ENCODE measurements at regions of chrX and their contacts with region 1.

Region 1: DNA sequence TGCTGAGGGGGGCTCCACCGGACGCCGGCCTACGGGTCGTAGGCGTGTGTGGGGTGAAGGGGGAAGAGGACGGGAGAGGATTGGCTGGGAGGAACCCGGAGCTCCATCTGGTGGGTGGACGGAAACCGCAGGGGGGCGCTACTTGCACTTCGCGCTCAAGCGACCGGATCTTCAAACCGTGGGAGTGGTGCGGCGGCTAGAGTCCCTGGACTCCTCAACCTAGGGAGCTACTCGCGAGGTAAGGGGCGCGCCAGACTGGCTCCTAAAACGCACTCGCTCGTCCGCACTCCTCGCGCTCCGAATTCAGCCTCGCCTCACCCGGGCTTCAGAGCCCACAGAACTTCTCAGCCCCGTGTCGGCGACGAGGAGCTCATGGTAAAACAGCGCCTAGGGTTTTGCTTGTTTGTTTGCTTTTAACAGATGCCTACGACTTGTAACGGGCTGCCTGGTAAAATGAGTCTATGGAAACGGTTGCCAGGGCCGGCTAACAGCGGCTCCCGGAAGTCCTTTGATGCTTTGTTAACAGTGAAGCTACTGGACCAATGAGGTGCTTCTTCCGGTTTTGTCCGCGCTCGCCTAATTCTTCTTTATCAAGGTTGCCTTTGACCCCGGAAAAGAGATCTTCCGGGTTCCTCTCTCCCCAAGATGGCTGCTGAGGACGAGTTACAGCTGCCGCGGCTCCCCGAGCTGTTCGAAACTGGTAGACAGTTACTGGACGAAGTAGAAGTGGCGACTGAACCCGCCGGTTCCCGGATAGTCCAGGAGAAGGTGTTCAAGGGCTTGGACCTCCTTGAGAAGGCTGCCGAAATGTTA is at the start of gene IGBP1:
- H3K4me3 Mint-ChIP-seq: peak within 1 kb of the TSS; percentile 98
- H3K27ac Mint-ChIP-seq: peak within 1 kb of the TSS; percentile 93
- H3K4me1 Mint-ChIP-seq: peaks cover 26% of the 10 kb centered on the region
- H3K27me3 Mint-ChIP-seq: peaks cover 2% of the 10 kb centered on the region

Region 2: GRCh38 chrX:69615779-69616456 is 517.6 kb before region 1 on chrX and contains the start of gene EDA:
- intact Hi-C with region 1: loop called (anchors 5 kb)
- H3K4me3 Mint-ChIP-seq: peak within 1 kb of the TSS; percentile 81
- H3K27ac Mint-ChIP-seq: peak within 1 kb of the TSS; percentile 51
- H3K4me1 Mint-ChIP-seq: peaks cover 5% of the 10 kb centered on the region
- H3K27me3 Mint-ChIP-seq: peaks cover 26% of the 10 kb centered on the region

Region 3: GRCh38 chrX:70168238-70169188 is 35.0 kb after region 1 on chrX:
- intact Hi-C with region 1: no loop called
- H3K4me3 Mint-ChIP-seq: no peak overlapping the region
- H3K27ac Mint-ChIP-seq: no peak overlapping the region
- H3K4me1 Mint-ChIP-seq: peaks cover 9% of the 10 kb centered on the region
- H3K27me3 Mint-ChIP-seq: no peaks in the 10 kb centered on the region

Region 4: DNA sequence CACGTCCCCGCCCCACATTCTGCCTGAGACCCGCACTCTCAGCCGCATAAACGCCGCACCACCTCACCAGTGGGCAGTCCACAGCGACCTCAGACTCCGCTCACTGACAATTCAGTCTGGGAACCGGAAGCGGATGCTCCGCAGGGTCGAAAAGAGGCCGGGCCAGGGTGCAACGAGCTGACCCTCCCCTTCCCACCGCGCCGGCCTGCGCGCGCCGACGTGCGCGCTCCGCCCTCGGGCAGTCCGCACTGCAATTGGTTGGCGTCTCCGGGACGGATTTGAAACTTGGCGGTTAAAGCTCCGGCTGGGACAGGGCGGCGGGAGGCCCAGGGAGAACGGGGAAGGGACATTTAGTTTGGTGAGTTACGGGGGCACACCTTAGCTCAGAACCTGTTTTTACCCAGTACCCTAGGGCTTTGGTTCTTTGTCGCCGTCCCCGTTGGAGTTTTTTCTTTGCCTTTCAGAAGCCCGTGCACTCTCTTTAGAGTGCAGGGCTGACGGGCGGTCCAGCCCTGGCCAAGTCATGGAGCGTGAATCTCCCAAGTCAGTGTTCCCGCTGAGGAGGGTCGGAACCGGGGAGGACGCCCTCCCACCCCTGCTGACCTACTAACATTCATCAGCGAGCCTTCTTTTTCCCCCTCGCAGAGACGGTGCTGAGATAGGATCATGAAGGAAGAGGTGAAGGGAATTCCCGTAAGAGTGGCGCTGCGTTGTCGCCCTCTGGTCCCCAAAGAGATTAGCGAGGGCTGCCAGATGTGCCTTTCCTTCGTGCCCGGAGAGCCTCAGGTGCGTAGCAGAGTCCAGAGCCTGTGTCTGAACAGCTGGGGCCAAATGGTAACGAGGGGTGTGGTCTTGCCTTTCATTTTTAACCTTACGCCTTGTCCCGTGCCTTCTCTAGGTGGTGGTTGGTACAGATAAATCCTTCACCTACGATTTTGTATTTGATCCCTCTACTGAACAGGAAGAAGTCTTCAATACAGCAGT is 156.6 kb after region 1 on chrX and contains the starts of genes KIF4A and PDZD11:
- intact Hi-C with region 1: loop called (anchors 1 kb)
- H3K4me3 Mint-ChIP-seq: peak within 1 kb of the TSS; percentile 83
- H3K27ac Mint-ChIP-seq: peak within 1 kb of the TSS; percentile 77
- H3K4me1 Mint-ChIP-seq: peaks cover 5% of the 10 kb centered on the region
- H3K27me3 Mint-ChIP-seq: no peaks in the 10 kb centered on the region

Region 5: GRCh38 chrX:70433848-70434351 is 300.4 kb after region 1 on chrX:
- intact Hi-C with region 1: loop called (anchors 10 kb)
- H3K4me3 Mint-ChIP-seq: peak overlapping the region; percentile 81
- H3K27ac Mint-ChIP-seq: peak overlapping the region; percentile 83
- H3K4me1 Mint-ChIP-seq: peaks cover 44% of the 10 kb centered on the region
- H3K27me3 Mint-ChIP-seq: peaks cover 23% of the 10 kb centered on the region